B cell (primary cell): ENCODE measurements at regions of chr17 and their contacts with region 1.

Region 1: GRCh38 chr17:40086150-40087044 is 14.0 kb downstream of the NR1D1 start:
- DNase-seq: peak; percentile 72
- ATAC-seq: peak; percentile 78
- H3K4me3 ChIP-seq: no peak overlapping the region
- H3K4me3 Mint-ChIP-seq: no peak overlapping the region
- H3K27ac ChIP-seq: no peak overlapping the region
- H3K27ac Mint-ChIP-seq: no peak overlapping the region
- H3K4me1 ChIP-seq: no peaks in the 10 kb centered on the region
- H3K4me1 Mint-ChIP-seq: peaks cover 3% of the 10 kb centered on the region
- H3K27me3 ChIP-seq: no peaks in the 10 kb centered on the region
- H3K27me3 Mint-ChIP-seq: no peaks in the 10 kb centered on the region
- CTCF ChIP-seq: peak; percentile 85

Region 2: GRCh38 chr17:40018211-40019121 is 67.9 kb before region 1 on chr17:
- CTCF ChIA-PET with region 1: interaction called, 18 read pairs
- POLR2A ChIA-PET with region 1: no interaction called
- intact Hi-C with region 1: loop called (anchors 1 kb)
- DNase-seq: no peak
- ATAC-seq: no peak
- H3K4me3 ChIP-seq: no peak overlapping the region
- H3K4me3 Mint-ChIP-seq: no peak overlapping the region
- H3K27ac ChIP-seq: no peak overlapping the region
- H3K27ac Mint-ChIP-seq: no peak overlapping the region
- H3K4me1 ChIP-seq: peaks cover 0 to 3% of the 10 kb centered on the region in 2 donors
- H3K4me1 Mint-ChIP-seq: no peaks in the 10 kb centered on the region
- H3K27me3 ChIP-seq: no peaks in the 10 kb centered on the region
- H3K27me3 Mint-ChIP-seq: no peaks in the 10 kb centered on the region
- CTCF ChIP-seq: no peak

Region 3: GRCh38 chr17:40026816-40027613 is 59.4 kb before region 1 on chr17:
- CTCF ChIA-PET with region 1: interaction called, 19 read pairs
- POLR2A ChIA-PET with region 1: no interaction called
- intact Hi-C with region 1: loop called (anchors 1 kb)
- DNase-seq: peak; percentile 85
- ATAC-seq: peak; percentile 92
- H3K4me3 ChIP-seq: no peak overlapping the region
- H3K4me3 Mint-ChIP-seq: no peak overlapping the region
- H3K27ac ChIP-seq: no peak overlapping the region
- H3K27ac Mint-ChIP-seq: no peak overlapping the region
- H3K4me1 ChIP-seq: peaks cover 0 to 5% of the 10 kb centered on the region in 2 donors
- H3K4me1 Mint-ChIP-seq: peaks cover 4% of the 10 kb centered on the region
- H3K27me3 ChIP-seq: no peaks in the 10 kb centered on the region
- H3K27me3 Mint-ChIP-seq: no peaks in the 10 kb centered on the region
- CTCF ChIP-seq: peak; percentile 94

Region 4: GRCh38 chr17:40038882-40039513 is 47.4 kb before region 1 on chr17:
- CTCF ChIA-PET with region 1: interaction called, 17 read pairs
- POLR2A ChIA-PET with region 1: no interaction called
- intact Hi-C with region 1: loop called (anchors 1 kb)
- DNase-seq: no peak
- ATAC-seq: no peak
- H3K4me3 ChIP-seq: no peak overlapping the region
- H3K4me3 Mint-ChIP-seq: no peak overlapping the region
- H3K27ac ChIP-seq: no peak overlapping the region
- H3K27ac Mint-ChIP-seq: no peak overlapping the region
- H3K4me1 ChIP-seq: no peaks in the 10 kb centered on the region
- H3K4me1 Mint-ChIP-seq: no peaks in the 10 kb centered on the region
- H3K27me3 ChIP-seq: no peaks in the 10 kb centered on the region
- H3K27me3 Mint-ChIP-seq: no peaks in the 10 kb centered on the region
- CTCF ChIP-seq: peak; percentile 28

Region 5: GRCh38 chr17:40062329-40063186 is 23.8 kb before region 1 on chr17 and contains the start of gene THRA:
- CTCF ChIA-PET with region 1: interaction called, 70 read pairs
- POLR2A ChIA-PET with region 1: interaction called, 3 read pairs
- intact Hi-C with region 1: loop called (anchors 1 kb)
- DNase-seq: peak; percentile 85
- ATAC-seq: peak; percentile 92
- H3K4me3 ChIP-seq: peak within 1 kb of the TSS; percentile 53 to 96 (median 95)
- H3K4me3 Mint-ChIP-seq: peak within 1 kb of the TSS; percentile 91
- H3K27ac ChIP-seq: peak within 1 kb of the TSS; percentile 59 to 67
- H3K27ac Mint-ChIP-seq: peak within 1 kb of the TSS; percentile 93
- H3K4me1 ChIP-seq: peaks cover 17 to 23% of the 10 kb centered on the region in 2 donors
- H3K4me1 Mint-ChIP-seq: peaks cover 39% of the 10 kb centered on the region
- H3K27me3 ChIP-seq: peaks cover 0 to 6% (median 1%) of the 10 kb centered on the region in 4 experiments
- H3K27me3 Mint-ChIP-seq: peaks cover 6% of the 10 kb centered on the region
- CTCF ChIP-seq: no peak
- total RNA-seq, gene THRA: 16.8 and 17.1 TPM in 2 replicates

Region 6: GRCh38 chr17:40068917-40069750 is 17.3 kb before region 1 on chr17:
- CTCF ChIA-PET with region 1: interaction called, 70 read pairs
- POLR2A ChIA-PET with region 1: interaction called, 3 read pairs
- intact Hi-C with region 1: no loop called
- DNase-seq: peak; percentile 79
- ATAC-seq: peak; percentile 57
- H3K4me3 ChIP-seq: peak overlapping the region; percentile 17 to 59 (median 53)
- H3K4me3 Mint-ChIP-seq: peak overlapping the region; percentile 88
- H3K27ac ChIP-seq: peak overlapping the region; percentile 18 to 24
- H3K27ac Mint-ChIP-seq: peak overlapping the region; percentile 74
- H3K4me1 ChIP-seq: peaks cover 47 to 53% of the 10 kb centered on the region in 2 donors
- H3K4me1 Mint-ChIP-seq: peaks cover 72% of the 10 kb centered on the region
- H3K27me3 ChIP-seq: no peaks in the 10 kb centered on the region
- H3K27me3 Mint-ChIP-seq: no peaks in the 10 kb centered on the region
- CTCF ChIP-seq: no peak

Region 7: GRCh38 chr17:40098846-40099618 is 12.6 kb after region 1 on chr17:
- CTCF ChIA-PET with region 1: interaction called, 64 read pairs
- POLR2A ChIA-PET with region 1: interaction called, 7 read pairs
- intact Hi-C with region 1: no loop called
- DNase-seq: peak; percentile 98
- ATAC-seq: peak; percentile 64
- H3K4me3 ChIP-seq: peak overlapping the region; percentile 51 to 91 (median 78)
- H3K4me3 Mint-ChIP-seq: peak overlapping the region; percentile 77
- H3K27ac ChIP-seq: peak overlapping the region; percentile 92 to 93
- H3K27ac Mint-ChIP-seq: peak overlapping the region; percentile 89
- H3K4me1 ChIP-seq: peaks cover 53 to 70% of the 10 kb centered on the region in 2 donors
- H3K4me1 Mint-ChIP-seq: peaks cover 74% of the 10 kb centered on the region
- H3K27me3 ChIP-seq: no peaks in the 10 kb centered on the region
- H3K27me3 Mint-ChIP-seq: no peaks in the 10 kb centered on the region
- CTCF ChIP-seq: no peak